ENCODE measurements at regions of chr2 and their contacts with region 1.

Region 1: GRCh38 chr2:203871371-203871983 is 3.9 kb downstream of the CTLA4 start:
- DNase-seq: peak; percentile 60
- ATAC-seq: peak; percentile 47
- H3K4me3 Mint-ChIP-seq: peak overlapping the region; percentile 93
- H3K27ac Mint-ChIP-seq: peak overlapping the region; percentile 100
- H3K4me1 Mint-ChIP-seq: peaks cover 73% of the 10 kb centered on the region
- H3K27me3 Mint-ChIP-seq: no peaks in the 10 kb centered on the region

Region 2: DNA sequence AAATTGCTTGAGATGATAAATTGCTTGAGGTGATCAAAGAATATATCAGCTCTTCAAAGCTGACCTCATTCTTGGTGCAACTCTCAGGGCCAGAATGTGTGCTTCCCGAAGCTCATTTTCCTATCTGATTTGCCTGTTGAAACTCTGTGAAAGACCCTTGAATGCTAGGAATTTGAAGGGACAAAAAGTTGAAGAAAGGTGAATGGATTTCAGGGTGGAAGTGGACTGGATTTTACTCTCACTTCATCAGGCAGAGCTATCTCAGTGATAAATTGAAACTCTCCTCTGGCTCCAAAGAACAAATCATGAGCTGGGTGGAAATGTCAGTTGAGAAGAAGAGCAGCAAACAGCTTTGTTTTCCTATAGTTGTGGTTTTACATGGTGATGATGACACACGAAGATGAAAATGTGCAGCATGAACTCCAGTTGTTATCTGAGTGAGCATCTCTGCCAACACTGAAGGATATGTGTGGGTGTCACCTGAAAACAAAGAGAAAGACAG is 130.6 kb before region 1 on chr2:
- CTCF ChIA-PET with region 1: interaction called, 3 read pairs
- POLR2A ChIA-PET with region 1: interaction called, 29 read pairs
- intact Hi-C with region 1: no loop called
- DNase-seq: peak; percentile 52
- ATAC-seq: peak; percentile 70
- H3K4me3 Mint-ChIP-seq: peak overlapping the region; percentile 62
- H3K27ac Mint-ChIP-seq: peak overlapping the region; percentile 99
- H3K4me1 Mint-ChIP-seq: peaks cover 92% of the 10 kb centered on the region
- H3K27me3 Mint-ChIP-seq: no peaks in the 10 kb centered on the region

Region 3: GRCh38 chr2:203858176-203858575 is 13.3 kb before region 1 on chr2:
- CTCF ChIA-PET with region 1: interaction called, 41 read pairs
- POLR2A ChIA-PET with region 1: interaction called, 21 read pairs
- intact Hi-C with region 1: loop called (anchors 1 kb)
- DNase-seq: peak; percentile 62
- ATAC-seq: peak; percentile 57
- H3K4me3 Mint-ChIP-seq: peak overlapping the region; percentile 15
- H3K27ac Mint-ChIP-seq: peak overlapping the region; percentile 66
- H3K4me1 Mint-ChIP-seq: peaks cover 85% of the 10 kb centered on the region
- H3K27me3 Mint-ChIP-seq: no peaks in the 10 kb centered on the region

Region 4: DNA sequence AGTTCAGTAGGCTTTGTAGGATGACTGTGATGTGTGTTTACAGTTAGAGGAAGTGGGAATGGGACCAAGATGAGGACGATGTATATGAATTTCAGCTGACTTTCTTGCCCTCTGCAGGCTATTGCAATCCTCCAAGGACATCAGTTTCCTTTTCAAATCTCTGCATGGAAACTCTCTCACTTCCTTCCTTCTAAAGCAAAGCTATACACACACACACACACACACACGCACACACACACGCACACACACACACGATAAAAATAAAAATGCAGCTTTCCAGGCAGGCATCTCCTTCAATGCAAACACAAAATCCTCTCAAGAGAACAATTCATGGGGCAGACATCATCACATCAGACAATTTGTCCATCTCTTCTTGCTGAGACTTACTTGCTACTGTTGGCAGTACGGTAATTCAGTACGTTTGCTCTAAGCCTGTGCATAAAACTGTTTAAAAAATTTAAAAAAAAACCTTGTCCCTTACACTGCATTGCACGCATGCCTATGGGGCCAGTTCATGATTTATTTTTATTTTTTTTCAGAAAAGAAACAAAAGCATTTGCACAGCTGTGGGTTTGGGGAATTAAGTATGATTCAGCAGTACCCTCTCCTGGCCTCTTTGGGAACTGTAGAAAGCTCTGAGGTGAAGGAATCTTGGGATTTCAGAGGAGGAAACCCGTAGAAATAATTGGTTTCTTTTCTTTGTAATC is 37.9 kb after region 1 on chr2:
- CTCF ChIA-PET with region 1: interaction called, 11 read pairs
- POLR2A ChIA-PET with region 1: interaction called, 5 read pairs
- intact Hi-C with region 1: loop called (anchors 1 to 2 kb)
- DNase-seq: peak; percentile 44
- ATAC-seq: peak; percentile 72
- H3K4me3 Mint-ChIP-seq: peak overlapping the region; percentile 0
- H3K27ac Mint-ChIP-seq: peak overlapping the region; percentile 44
- H3K4me1 Mint-ChIP-seq: peaks cover 30% of the 10 kb centered on the region
- H3K27me3 Mint-ChIP-seq: peaks cover 2% of the 10 kb centered on the region

Region 5: GRCh38 chr2:204024503-204024902 is 153.0 kb after region 1 on chr2:
- CTCF ChIA-PET with region 1: no interaction called
- POLR2A ChIA-PET with region 1: no interaction called
- intact Hi-C with region 1: loop called in 1 of 2 experiments (anchors 5 kb)
- DNase-seq: peak; percentile 50
- ATAC-seq: no peak
- H3K4me3 Mint-ChIP-seq: no peak overlapping the region
- H3K27ac Mint-ChIP-seq: no peak overlapping the region
- H3K4me1 Mint-ChIP-seq: peaks cover 52% of the 10 kb centered on the region
- H3K27me3 Mint-ChIP-seq: no peaks in the 10 kb centered on the region

Region 6: DNA sequence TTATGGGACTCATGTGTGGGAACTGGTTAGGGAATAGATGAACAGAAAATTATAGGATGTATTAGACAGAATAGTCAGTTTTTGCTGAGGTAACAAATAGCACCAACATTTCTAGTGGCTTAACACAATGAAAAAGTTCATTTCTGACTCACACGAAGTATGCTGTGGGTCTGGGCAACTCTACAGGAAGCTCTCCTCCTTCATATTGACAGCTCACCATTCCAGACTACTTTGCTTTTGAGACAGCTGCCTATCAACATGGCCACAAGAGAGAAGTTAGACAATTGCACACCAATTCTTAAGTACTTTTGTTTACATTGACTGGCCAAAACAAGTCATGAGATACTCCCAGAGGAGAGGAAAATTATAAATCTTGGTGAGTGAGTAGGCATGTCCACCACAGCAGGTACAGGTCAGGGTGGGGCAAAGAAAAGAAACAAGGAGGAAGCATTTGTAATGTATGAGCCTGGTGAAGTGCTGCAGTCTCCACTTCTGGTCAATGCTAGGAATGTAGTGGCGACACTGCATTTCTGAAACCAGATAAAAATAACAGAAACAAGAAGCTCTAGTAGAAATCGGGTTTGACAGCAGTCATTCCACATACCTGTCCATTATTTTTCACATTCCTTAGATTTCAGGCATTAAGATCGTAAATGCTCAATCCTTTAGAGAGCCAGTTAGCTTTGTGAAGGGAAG is 206.7 kb after region 1 on chr2:
- CTCF ChIA-PET with region 1: no interaction called
- POLR2A ChIA-PET with region 1: no interaction called
- intact Hi-C with region 1: no loop called
- DNase-seq: no peak
- ATAC-seq: peak; percentile 80
- H3K4me3 Mint-ChIP-seq: no peak overlapping the region
- H3K27ac Mint-ChIP-seq: no peak overlapping the region
- H3K4me1 Mint-ChIP-seq: peaks cover 7% of the 10 kb centered on the region
- H3K27me3 Mint-ChIP-seq: peaks cover 5% of the 10 kb centered on the region

Measured in activated CD4-positive, alpha-beta T cell treated with anti-CD3 and anti-CD28 coated beads for 36 hours (primary cell).